GM12878 (cell line): ENCODE measurements at regions of chr2 and their contacts with region 1.

Region 1: GRCh38 chr2:222707689-222708525 is 36.4 kb downstream of the MOGAT1 start:
- DNase-seq: no peak
- ATAC-seq: peak; percentile 81
- H3K4me3 ChIP-seq: no peak overlapping the region
- H3K27ac ChIP-seq: no peak overlapping the region
- H3K4me1 ChIP-seq: peaks cover 8% of the 10 kb centered on the region
- H3K27me3 ChIP-seq: no peaks in the 10 kb centered on the region
- CTCF ChIP-seq: peak; percentile 75 to 88 (median 78)
- EP300 ChIP-seq: no peak
- POLR2A ChIP-seq: no peak
- RAD21 ChIP-seq: peak; percentile 92

Region 2: DNA sequence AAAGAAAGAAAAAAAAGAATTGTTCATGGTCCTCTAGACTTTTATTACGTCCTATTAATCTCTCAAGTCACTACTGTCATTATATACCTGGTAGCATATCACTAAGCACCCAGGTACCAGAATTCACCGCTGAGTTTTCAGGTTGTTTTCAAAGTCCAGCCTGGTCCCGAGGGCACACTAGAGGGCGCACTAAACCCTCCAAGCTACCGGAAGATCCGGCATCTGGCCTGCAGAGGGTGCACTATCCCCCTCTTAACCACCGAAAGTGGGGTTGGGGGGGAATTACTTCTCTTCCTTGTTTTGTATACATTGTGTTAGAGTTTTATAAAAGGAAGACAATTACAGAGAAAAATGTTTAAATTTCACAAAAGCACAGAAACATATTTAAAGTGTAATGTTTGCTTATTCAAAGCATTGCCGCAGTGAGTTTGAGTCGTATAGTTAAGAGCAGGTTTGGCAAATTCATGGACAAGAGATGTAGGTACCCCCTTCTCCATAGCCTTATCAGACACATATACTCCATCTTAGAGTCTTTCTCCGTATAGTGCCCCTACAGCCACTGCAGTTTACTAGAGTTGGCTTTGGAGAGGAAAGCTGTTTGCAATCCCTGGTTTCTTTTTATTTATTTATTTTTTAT is 17.2 kb before region 1 on chr2:
- CTCF ChIA-PET with region 1: interaction called, 33 read pairs
- POLR2A ChIA-PET with region 1: no interaction called
- RAD21 ChIA-PET with region 1: interaction called, 4 read pairs
- SMC1A ChIA-PET with region 1: interaction called, 16 read pairs
- in situ Hi-C with region 1: no loop called
- intact Hi-C with region 1: no loop called
- DNase-seq: no peak
- ATAC-seq: peak; percentile 99
- H3K4me3 ChIP-seq: no peak overlapping the region
- H3K27ac ChIP-seq: no peak overlapping the region
- H3K4me1 ChIP-seq: no peaks in the 10 kb centered on the region
- H3K27me3 ChIP-seq: no peaks in the 10 kb centered on the region
- CTCF ChIP-seq: peak; percentile 99 to 100 (median 100); a peak in 5 of 6 replicates
- EP300 ChIP-seq: no peak
- POLR2A ChIP-seq: no peak
- RAD21 ChIP-seq: peak; percentile 93

Region 3: DNA sequence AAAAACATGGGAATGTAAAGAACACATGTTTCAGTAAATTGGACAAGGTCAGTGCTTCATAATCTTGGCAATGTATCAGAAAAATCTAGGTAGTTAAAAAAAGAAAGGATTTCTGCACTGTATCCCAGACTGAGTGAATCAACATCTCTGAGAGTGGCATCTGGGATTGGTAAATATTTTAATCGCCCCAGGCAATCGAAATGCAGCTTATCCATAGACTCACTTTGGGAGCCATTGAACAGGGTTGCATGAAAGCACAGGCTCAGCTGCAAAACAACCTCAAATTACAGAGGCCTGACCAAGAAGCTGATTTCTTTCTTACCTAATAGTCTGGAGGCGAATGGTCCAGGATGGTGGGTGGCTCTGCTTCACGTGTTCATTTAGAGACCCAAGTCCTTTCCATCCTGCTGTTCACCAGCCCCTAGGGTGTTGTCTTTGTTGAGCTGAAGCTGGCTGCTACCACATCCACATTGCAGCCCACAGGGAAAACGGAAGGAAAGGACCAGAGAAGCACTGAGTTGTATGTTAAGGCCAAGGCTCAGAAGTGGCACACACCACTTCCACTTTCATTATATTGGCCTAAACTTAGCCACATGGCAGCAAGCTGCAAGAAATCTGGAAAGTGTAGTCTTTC is 22.6 kb after region 1 on chr2:
- CTCF ChIA-PET with region 1: interaction called, 24 read pairs
- POLR2A ChIA-PET with region 1: interaction called, 3 read pairs
- RAD21 ChIA-PET with region 1: interaction called, 3 read pairs
- SMC1A ChIA-PET with region 1: interaction called, 18 read pairs
- in situ Hi-C with region 1: no loop called
- intact Hi-C with region 1: no loop called
- DNase-seq: peak; percentile 55
- ATAC-seq: peak; percentile 82
- H3K4me3 ChIP-seq: 0 out of 2 replicates have a peak overlapping the region, but pooled peaks have one; percentile 29
- H3K27ac ChIP-seq: peak overlapping the region; percentile 69
- H3K4me1 ChIP-seq: peaks cover 31% of the 10 kb centered on the region
- H3K27me3 ChIP-seq: no peaks in the 10 kb centered on the region
- CTCF ChIP-seq: no peak
- EP300 ChIP-seq: no peak
- POLR2A ChIP-seq: no peak
- RAD21 ChIP-seq: no peak

Region 4: DNA sequence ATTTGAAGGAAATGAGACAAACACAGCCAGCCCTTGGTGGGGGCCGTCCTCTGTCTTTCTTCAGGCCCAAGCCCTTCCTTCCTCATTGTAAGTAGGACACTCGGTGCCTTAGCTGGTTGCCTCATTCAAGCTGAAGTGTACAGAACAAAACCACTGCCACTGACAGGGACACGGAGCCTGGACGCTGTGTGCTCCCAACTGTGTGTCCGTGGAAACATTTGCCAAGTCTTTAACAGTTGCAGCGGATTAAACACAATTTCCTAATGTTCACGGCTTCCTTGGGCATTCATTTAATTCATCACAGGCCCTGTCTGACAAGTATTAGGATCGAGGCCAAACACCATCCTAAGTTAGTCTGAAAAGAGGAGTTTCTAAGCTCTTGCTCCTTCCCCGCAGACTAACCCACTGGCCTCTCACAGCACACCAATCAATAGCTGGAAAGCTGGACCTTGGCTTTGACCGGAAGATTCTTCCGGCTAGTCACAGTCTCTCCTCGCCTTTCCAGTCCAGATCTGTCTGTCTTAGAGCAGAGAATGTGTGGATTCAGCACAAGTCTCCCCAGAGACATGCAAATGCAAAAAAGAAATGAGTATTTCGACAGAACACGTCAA is 84.2 kb after region 1 on chr2:
- CTCF ChIA-PET with region 1: interaction called, 8 read pairs
- POLR2A ChIA-PET with region 1: no interaction called
- RAD21 ChIA-PET with region 1: interaction called, 5 read pairs
- SMC1A ChIA-PET with region 1: interaction called, 7 read pairs
- in situ Hi-C with region 1: no loop called
- intact Hi-C with region 1: loop called (anchors 5 kb)
- DNase-seq: no peak
- ATAC-seq: no peak
- H3K4me3 ChIP-seq: no peak overlapping the region
- H3K27ac ChIP-seq: no peak overlapping the region
- H3K4me1 ChIP-seq: peaks cover 11% of the 10 kb centered on the region
- H3K27me3 ChIP-seq: no peaks in the 10 kb centered on the region
- CTCF ChIP-seq: no peak
- EP300 ChIP-seq: no peak
- POLR2A ChIP-seq: no peak
- RAD21 ChIP-seq: no peak

Region 5: DNA sequence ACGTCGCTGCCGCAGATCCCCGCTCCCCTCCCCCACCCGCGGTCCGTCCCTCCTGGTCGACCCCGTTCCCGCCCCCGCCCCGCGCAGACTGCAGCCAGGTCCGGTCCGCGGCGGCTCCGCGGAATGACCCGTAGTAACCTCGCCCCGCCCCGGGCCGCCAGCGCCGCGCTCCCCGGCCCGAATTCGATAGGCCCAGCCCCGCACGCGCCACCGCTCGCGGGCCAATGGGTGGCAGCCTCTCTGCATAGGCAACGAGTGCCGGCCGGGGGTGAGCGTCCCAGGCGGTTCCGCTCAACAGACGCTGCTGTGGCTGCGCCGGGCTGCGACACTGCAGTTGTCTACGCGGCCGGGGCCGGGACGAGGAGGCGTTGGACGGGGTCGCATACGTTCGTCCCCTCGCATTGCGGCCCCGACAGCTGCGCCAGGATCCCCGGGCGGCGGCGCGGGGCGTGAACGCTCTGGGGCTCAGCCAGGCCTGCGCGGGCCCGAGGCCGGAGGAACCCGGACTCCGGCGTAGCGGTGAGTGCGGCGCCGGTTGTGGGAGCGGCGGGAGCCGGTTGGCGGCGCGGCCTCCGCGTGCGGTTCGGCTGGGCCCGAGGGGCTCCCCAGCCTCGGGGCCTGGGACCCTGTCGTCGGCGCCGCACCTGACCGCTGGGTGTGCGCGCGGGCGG is 153.0 kb after region 1 on chr2 and contains the start of gene ACSL3:
- CTCF ChIA-PET with region 1: interaction called, 31 read pairs
- POLR2A ChIA-PET with region 1: no interaction called
- RAD21 ChIA-PET with region 1: interaction called, 12 read pairs
- SMC1A ChIA-PET with region 1: interaction called, 10 read pairs
- in situ Hi-C with region 1: no loop called
- intact Hi-C with region 1: no loop called
- DNase-seq: peak; percentile 66
- ATAC-seq: peak; percentile 98
- H3K4me3 ChIP-seq: peak within 1 kb of the TSS; percentile 67
- H3K27ac ChIP-seq: peak within 1 kb of the TSS; percentile 74
- H3K4me1 ChIP-seq: peaks cover 6% of the 10 kb centered on the region
- H3K27me3 ChIP-seq: no peaks in the 10 kb centered on the region
- CTCF ChIP-seq: no peak; a peak in 1 of 6 replicates
- EP300 ChIP-seq: no peak
- POLR2A ChIP-seq: peak; percentile 100
- RAD21 ChIP-seq: no peak
- polyA plus RNA-seq, gene ACSL3: 15.6 to 24.0 TPM

Region 6: GRCh38 chr2:222903234-222904220 is 195.6 kb after region 1 on chr2:
- CTCF ChIA-PET with region 1: interaction called, 141 read pairs
- POLR2A ChIA-PET with region 1: no interaction called
- RAD21 ChIA-PET with region 1: interaction called, 66 read pairs
- SMC1A ChIA-PET with region 1: interaction called, 100 read pairs
- in situ Hi-C with region 1: no loop called
- intact Hi-C with region 1: loop called (anchors 1 kb)
- DNase-seq: no peak
- ATAC-seq: peak; percentile 95
- H3K4me3 ChIP-seq: no peak overlapping the region
- H3K27ac ChIP-seq: no peak overlapping the region
- H3K4me1 ChIP-seq: no peaks in the 10 kb centered on the region
- H3K27me3 ChIP-seq: no peaks in the 10 kb centered on the region
- CTCF ChIP-seq: peak; percentile 62 to 77 (median 66); a peak in 5 of 6 replicates
- EP300 ChIP-seq: no peak
- POLR2A ChIP-seq: no peak
- RAD21 ChIP-seq: peak; percentile 95

Region 7: DNA sequence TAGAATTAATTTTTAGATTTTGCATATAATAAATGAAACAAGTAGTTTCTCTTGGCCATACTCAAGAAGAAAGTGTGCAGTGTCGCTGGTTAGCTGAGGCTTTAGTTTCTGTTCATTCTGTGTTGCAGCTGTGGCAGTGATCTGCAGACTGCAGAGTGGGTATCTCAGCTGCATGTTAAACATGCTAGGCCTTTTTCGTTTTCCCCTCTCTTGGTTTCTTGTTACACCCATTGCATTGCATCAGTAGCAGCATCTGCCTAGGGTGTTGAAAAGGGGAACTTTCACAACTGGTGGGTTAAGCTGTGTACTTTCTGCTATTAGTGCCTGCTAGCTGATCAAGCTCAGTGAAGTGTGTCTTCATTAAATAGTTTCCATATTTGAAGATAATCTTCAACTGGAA is 204.2 kb after region 1 on chr2:
- CTCF ChIA-PET with region 1: interaction called, 36 read pairs
- POLR2A ChIA-PET with region 1: no interaction called
- RAD21 ChIA-PET with region 1: interaction called, 16 read pairs
- SMC1A ChIA-PET with region 1: interaction called, 13 read pairs
- in situ Hi-C with region 1: no loop called
- intact Hi-C with region 1: no loop called
- DNase-seq: peak; percentile 92
- ATAC-seq: peak; percentile 96
- H3K4me3 ChIP-seq: peak overlapping the region; percentile 44; the same call in 1 of the 2 replicates
- H3K27ac ChIP-seq: peak overlapping the region; percentile 96
- H3K4me1 ChIP-seq: peaks cover 23% of the 10 kb centered on the region
- H3K27me3 ChIP-seq: no peaks in the 10 kb centered on the region
- CTCF ChIP-seq: no peak
- EP300 ChIP-seq: peak; percentile 58 to 88; a peak in 3 of 4 replicates
- POLR2A ChIP-seq: peak; percentile 75
- RAD21 ChIP-seq: no peak